PC-9 (cell line): ENCODE measurements at regions of chr11 and their contacts with region 1.

Region 1: GRCh38 chr11:78416305-78417178 is 1.1 kb downstream of the GAB2 start:
- DNase-seq: peak; percentile 81 to 84
- H3K4me3 ChIP-seq: peak overlapping the region; percentile 84
- H3K27ac ChIP-seq: peak overlapping the region; percentile 61
- H3K4me1 ChIP-seq: peaks cover 26% of the 10 kb centered on the region
- H3K27me3 ChIP-seq: no peaks in the 10 kb centered on the region
- CTCF ChIP-seq: peak; percentile 72

Region 2: GRCh38 chr11:78045851-78046485 is 370.6 kb before region 1 on chr11:
- CTCF ChIA-PET with region 1: no interaction called
- POLR2A ChIA-PET with region 1: no interaction called
- intact Hi-C with region 1: loop called (anchors 10 kb)
- DNase-seq: peak; percentile 56 to 93
- H3K4me3 ChIP-seq: peak overlapping the region; percentile 37; the same call in 1 of the 2 replicates
- H3K27ac ChIP-seq: no peak overlapping the region
- H3K4me1 ChIP-seq: peaks cover 10% of the 10 kb centered on the region
- H3K27me3 ChIP-seq: no peaks in the 10 kb centered on the region
- CTCF ChIP-seq: peak; percentile 100

Region 3: GRCh38 chr11:78139422-78140391 is 276.8 kb before region 1 on chr11 and contains the start of gene ALG8:
- CTCF ChIA-PET with region 1: no interaction called
- POLR2A ChIA-PET with region 1: no interaction called
- intact Hi-C with region 1: loop called (anchors 2 kb)
- DNase-seq: peak; percentile 92 to 98
- H3K4me3 ChIP-seq: peak within 1 kb of the TSS; percentile 63
- H3K27ac ChIP-seq: peak within 1 kb of the TSS; percentile 58
- H3K4me1 ChIP-seq: peaks cover 21% of the 10 kb centered on the region
- H3K27me3 ChIP-seq: no peaks in the 10 kb centered on the region
- CTCF ChIP-seq: no peak
- total RNA-seq, gene ALG8: 63.4 and 67.5 TPM in 2 replicates

Region 4: DNA sequence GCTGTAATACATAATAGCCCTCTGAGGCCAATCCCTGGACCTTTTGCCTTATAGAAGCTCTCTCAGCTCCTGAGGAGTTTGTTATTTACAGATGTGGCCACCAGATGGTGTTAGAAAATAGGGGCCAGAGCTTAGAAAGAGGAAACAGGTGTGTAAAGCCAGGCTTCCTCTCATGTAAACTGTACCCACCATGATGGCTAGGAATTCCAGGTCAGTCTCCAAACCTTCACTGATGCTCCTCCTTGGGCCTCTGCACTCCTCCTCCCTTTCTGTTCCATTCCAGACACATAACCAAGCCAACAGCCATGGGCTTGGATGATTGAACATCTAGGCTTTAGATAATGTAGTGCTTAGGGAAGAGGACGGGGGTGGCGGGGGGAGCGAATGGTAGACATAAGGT is 188.1 kb before region 1 on chr11:
- CTCF ChIA-PET with region 1: interaction called, 9 read pairs
- POLR2A ChIA-PET with region 1: interaction called, 3 read pairs
- intact Hi-C with region 1: loop called (anchors 1 kb)
- DNase-seq: peak; percentile 45 to 64
- H3K4me3 ChIP-seq: no peak overlapping the region
- H3K27ac ChIP-seq: no peak overlapping the region
- H3K4me1 ChIP-seq: no peaks in the 10 kb centered on the region
- H3K27me3 ChIP-seq: no peaks in the 10 kb centered on the region
- CTCF ChIP-seq: peak; percentile 86

Region 5: GRCh38 chr11:78318321-78319114 is 98.0 kb before region 1 on chr11:
- CTCF ChIA-PET with region 1: no interaction called
- POLR2A ChIA-PET with region 1: no interaction called
- intact Hi-C with region 1: no loop called
- DNase-seq: no peak
- H3K4me3 ChIP-seq: no peak overlapping the region
- H3K27ac ChIP-seq: no peak overlapping the region
- H3K4me1 ChIP-seq: peaks cover 3% of the 10 kb centered on the region
- H3K27me3 ChIP-seq: no peaks in the 10 kb centered on the region
- CTCF ChIP-seq: no peak

Region 6: DNA sequence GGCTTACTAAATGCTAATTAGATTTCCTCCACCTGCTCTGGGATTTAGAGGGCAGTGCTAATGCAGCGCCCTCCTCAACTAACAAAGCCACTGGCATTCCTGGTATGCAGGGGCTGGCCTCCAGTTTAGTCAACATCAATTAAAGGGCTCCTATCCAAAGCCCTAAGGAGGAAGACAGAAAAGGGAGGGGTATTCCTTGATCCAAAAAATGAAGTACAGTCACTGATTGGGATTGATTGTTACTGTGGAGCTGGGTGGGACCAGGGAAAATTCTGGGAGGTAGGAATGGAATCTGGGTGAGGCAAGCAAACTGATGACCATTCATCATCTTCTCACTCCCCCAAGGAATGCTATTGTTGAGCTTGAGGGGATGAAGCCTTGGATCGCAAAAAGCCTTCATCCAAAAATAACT is 51.2 kb before region 1 on chr11:
- CTCF ChIA-PET with region 1: interaction called, 3 read pairs
- POLR2A ChIA-PET with region 1: no interaction called
- intact Hi-C with region 1: loop called (anchors 1 kb)
- DNase-seq: peak; percentile 84 to 95
- H3K4me3 ChIP-seq: no peak overlapping the region; the same call in 1 of the 2 replicates
- H3K27ac ChIP-seq: peak overlapping the region; percentile 40
- H3K4me1 ChIP-seq: peaks cover 22% of the 10 kb centered on the region
- H3K27me3 ChIP-seq: no peaks in the 10 kb centered on the region
- CTCF ChIP-seq: no peak